Gastrocnemius medialis (tissue), 4 donors: ENCODE measurements at regions of chr6 and their contacts with region 1.

Region 1: GRCh38 chr6:158649289-158650143 is at the start of gene SYTL3:
- DNase-seq: no peak
- ATAC-seq: no peak
- H3K4me3 ChIP-seq: no peak within 1 kb of the TSS
- H3K27ac ChIP-seq: peak within 1 kb of the TSS; percentile 77 to 82 (median 78)
- H3K4me1 ChIP-seq: peaks cover 15 to 19% of the 10 kb centered on the region in 2 donors
- H3K27me3 ChIP-seq: no peaks in the 10 kb centered on the region
- CTCF ChIP-seq: no peak
- POLR2A ChIP-seq: peak; percentile 8 to 32
- total RNA-seq, gene SYTL3: 3.0 to 16.7 (median 6.7) TPM

Region 2: DNA sequence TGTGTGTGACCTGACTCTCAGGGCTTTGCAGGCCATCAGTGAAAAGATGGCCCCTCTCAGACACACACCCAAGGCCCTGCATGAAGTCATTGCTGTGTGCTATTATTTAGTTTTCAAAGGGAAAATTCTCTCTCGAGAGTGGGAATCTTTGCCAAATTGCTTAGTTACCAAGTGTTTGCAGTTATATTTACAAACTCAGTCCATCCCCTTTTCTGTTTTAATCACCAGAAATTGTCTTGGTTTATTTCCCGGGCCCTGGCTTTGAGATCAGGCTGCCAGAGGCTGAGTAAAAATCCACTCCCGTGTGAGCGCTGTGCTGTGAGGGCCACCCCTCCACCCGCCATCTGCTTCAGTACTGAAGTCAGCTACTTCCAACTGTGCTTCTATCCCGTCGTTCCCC is 880.4 kb after region 1 on chr6:
- in situ Hi-C with region 1: no loop called
- intact Hi-C with region 1: loop called (anchors 10 kb)
- DNase-seq: no peak
- ATAC-seq: peak in 1 of 2 donors; percentile 30
- H3K4me3 ChIP-seq: no peak overlapping the region
- H3K27ac ChIP-seq: no peak overlapping the region
- H3K4me1 ChIP-seq: no peaks in the 10 kb centered on the region
- H3K27me3 ChIP-seq: no peaks in the 10 kb centered on the region
- CTCF ChIP-seq: no peak
- POLR2A ChIP-seq: no peak